Mammary epithelial cell (primary cell): ENCODE measurements at regions of chr16 and their contacts with region 1.

Region 1: GRCh38 chr16:79997257-79997656 is 396.7 kb upstream of the MAF start:
- DNase-seq: no peak
- H3K4me3 ChIP-seq: no peak overlapping the region
- H3K27ac ChIP-seq: no peak overlapping the region
- H3K4me1 ChIP-seq: peaks cover 4% of the 10 kb centered on the region
- H3K27me3 ChIP-seq: no peaks in the 10 kb centered on the region
- CTCF ChIP-seq: peak; percentile 48 to 59

Region 2: GRCh38 chr16:80014241-80014939 is 17.1 kb after region 1 on chr16:
- CTCF ChIA-PET with region 1: no interaction called
- dilution Hi-C with region 1: no loop called
- in situ Hi-C with region 1: no loop called
- intact Hi-C with region 1: no loop called
- DNase-seq: peak; percentile 73
- H3K4me3 ChIP-seq: no peak overlapping the region
- H3K27ac ChIP-seq: no peak overlapping the region
- H3K4me1 ChIP-seq: peaks cover 16% of the 10 kb centered on the region
- H3K27me3 ChIP-seq: no peaks in the 10 kb centered on the region
- CTCF ChIP-seq: no peak

Region 3: DNA sequence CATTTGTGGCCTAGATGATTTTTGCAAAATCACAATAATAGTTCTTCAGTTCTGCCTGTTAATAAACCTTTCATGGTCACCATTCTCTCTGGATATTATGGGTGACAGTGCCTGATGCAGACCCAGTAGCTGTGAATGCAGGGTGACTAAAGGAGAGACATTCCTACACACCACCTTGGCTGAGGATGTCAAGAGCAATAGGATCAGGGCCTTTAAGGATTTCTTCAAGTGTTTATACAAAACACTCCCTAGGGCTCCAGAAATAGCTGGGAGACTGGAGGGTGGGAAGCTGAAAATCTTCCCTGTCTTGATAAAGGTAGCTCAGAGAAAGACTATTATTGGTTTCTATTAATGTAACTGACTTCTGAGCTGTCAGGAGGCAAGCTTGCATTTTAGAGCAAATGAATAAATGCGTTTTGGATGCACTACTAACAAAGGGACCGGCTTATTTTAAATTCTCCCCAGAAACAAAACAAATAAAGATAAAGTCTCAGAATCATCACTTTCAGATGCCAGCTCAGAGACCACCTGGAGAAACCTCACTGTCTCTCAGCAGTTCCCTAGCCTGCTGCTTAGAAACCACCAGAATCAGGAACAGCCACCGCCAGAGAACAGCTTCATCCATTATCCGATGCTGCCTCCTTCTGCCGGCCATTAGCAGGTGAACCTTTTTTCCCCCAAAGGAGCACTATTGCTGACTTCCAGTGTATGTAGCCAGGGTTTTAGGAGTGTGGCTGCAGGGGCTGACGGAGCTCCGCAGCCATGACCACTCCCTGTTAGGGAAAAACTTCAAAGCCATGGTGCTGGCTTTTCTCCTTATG is 372.1 kb after region 1 on chr16:
- CTCF ChIA-PET with region 1: no interaction called
- dilution Hi-C with region 1: no loop called
- in situ Hi-C with region 1: no loop called
- intact Hi-C with region 1: loop called (anchors 1 kb)
- DNase-seq: peak; percentile 39
- H3K4me3 ChIP-seq: no peak overlapping the region
- H3K27ac ChIP-seq: no peak overlapping the region
- H3K4me1 ChIP-seq: peaks cover 4% of the 10 kb centered on the region
- H3K27me3 ChIP-seq: no peaks in the 10 kb centered on the region
- CTCF ChIP-seq: peak; percentile 70 to 85